Activated CD4-positive, alpha-beta T cell treated with anti-CD3 and anti-CD28 coated beads for 36 hours (primary cell): ENCODE measurements at regions of chr19 and their contacts with region 1.

Region 1: GRCh38 chr19:10717356-10718204 is at the start of gene DNM2:
- DNase-seq: peak; percentile 98
- ATAC-seq: peak; percentile 92
- H3K4me3 Mint-ChIP-seq: peak within 1 kb of the TSS; percentile 97
- H3K27ac Mint-ChIP-seq: peak within 1 kb of the TSS; percentile 89
- H3K4me1 Mint-ChIP-seq: peaks cover 45% of the 10 kb centered on the region
- H3K27me3 Mint-ChIP-seq: no peaks in the 10 kb centered on the region
- total RNA-seq, gene DNM2: 167 to 185 TPM

Region 2: GRCh38 chr19:10403137-10404021 is 314.2 kb before region 1 on chr19 and contains the start of gene CDC37:
- CTCF ChIA-PET with region 1: interaction called, 3 read pairs
- POLR2A ChIA-PET with region 1: no interaction called
- intact Hi-C with region 1: loop called in 1 of 2 experiments (anchors 1 kb)
- DNase-seq: peak; percentile 99
- ATAC-seq: peak; percentile 79
- H3K4me3 Mint-ChIP-seq: peak within 1 kb of the TSS; percentile 94
- H3K27ac Mint-ChIP-seq: peak within 1 kb of the TSS; percentile 87
- H3K4me1 Mint-ChIP-seq: peaks cover 61% of the 10 kb centered on the region
- H3K27me3 Mint-ChIP-seq: no peaks in the 10 kb centered on the region
- total RNA-seq, gene CDC37: 178 to 190 TPM

Region 3: DNA sequence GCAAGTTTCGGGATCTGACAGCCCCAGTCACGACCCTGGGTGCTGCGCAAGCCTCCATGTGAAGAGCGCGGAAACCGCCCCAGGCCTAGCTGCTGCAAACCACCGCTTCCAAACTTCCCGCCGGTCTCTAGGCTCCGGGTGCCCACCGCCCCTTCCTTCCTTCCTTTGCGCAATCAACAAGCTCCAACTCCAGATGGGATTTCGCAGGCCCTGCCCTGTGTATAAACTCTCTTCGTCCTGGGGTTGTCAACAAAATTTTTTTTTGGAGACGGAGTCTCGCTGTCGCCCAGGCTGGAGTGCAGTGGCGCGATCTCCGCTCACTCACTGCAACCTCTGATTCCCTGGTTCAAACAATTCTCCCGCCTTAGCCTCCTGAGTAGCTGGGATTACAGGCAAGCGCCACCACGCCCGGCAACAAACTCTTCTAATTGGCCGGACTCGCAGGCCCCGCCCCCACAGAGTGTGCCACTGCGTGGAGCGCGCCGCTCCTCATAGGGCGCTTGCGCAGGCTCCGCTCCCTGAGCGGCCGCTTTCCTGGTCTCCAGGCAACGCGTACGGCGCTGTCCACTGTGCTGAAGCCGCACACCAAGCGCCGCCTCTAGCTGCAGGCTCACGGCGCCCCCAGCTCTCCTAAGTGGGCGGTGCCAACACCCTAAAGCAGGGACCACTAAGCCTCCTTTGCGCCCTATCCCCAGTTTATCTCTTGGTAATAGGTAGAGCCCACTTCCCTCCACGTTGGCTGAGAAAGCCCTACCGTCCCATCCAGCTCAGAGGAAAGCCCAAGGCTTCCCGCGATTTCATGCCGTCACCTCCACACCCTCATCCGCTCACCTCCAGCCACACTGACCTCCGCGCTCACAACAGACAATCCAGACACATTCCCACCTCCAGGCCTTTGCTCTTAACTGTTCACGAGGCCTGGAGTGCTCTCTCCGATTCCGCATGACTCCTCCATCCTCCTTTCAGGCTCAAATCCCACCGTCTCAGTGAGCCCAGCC is 21.9 kb before region 1 on chr19:
- CTCF ChIA-PET with region 1: interaction called, 48 read pairs
- POLR2A ChIA-PET with region 1: interaction called, 16 read pairs
- intact Hi-C with region 1: loop called in 1 of 2 experiments (anchors 1 kb)
- DNase-seq: peak; percentile 95
- ATAC-seq: peak; percentile 99
- H3K4me3 Mint-ChIP-seq: peak overlapping the region; percentile 59
- H3K27ac Mint-ChIP-seq: no peak overlapping the region
- H3K4me1 Mint-ChIP-seq: peaks cover 13% of the 10 kb centered on the region
- H3K27me3 Mint-ChIP-seq: no peaks in the 10 kb centered on the region

Region 4: GRCh38 chr19:10760273-10760944 is 42.8 kb after region 1 on chr19:
- CTCF ChIA-PET with region 1: interaction called, 19 read pairs
- POLR2A ChIA-PET with region 1: interaction called, 8 read pairs
- intact Hi-C with region 1: loop called (anchors 1 kb)
- DNase-seq: peak; percentile 72
- ATAC-seq: peak; percentile 56
- H3K4me3 Mint-ChIP-seq: peak overlapping the region; percentile 70
- H3K27ac Mint-ChIP-seq: peak overlapping the region; percentile 84
- H3K4me1 Mint-ChIP-seq: peaks cover 83% of the 10 kb centered on the region
- H3K27me3 Mint-ChIP-seq: no peaks in the 10 kb centered on the region

Region 5: GRCh38 chr19:10820173-10820572 is 102.6 kb after region 1 on chr19:
- CTCF ChIA-PET with region 1: interaction called, 10 read pairs
- POLR2A ChIA-PET with region 1: no interaction called
- intact Hi-C with region 1: loop called (anchors 1 to 5 kb)
- DNase-seq: peak; percentile 33
- ATAC-seq: peak; percentile 53
- H3K4me3 Mint-ChIP-seq: no peak overlapping the region
- H3K27ac Mint-ChIP-seq: peak overlapping the region; percentile 39
- H3K4me1 Mint-ChIP-seq: no peaks in the 10 kb centered on the region
- H3K27me3 Mint-ChIP-seq: no peaks in the 10 kb centered on the region

Region 6: GRCh38 chr19:10864538-10864899 is 146.9 kb after region 1 on chr19:
- CTCF ChIA-PET with region 1: interaction called, 44 read pairs
- POLR2A ChIA-PET with region 1: interaction called, 6 read pairs
- intact Hi-C with region 1: loop called (anchors 1 kb)
- DNase-seq: peak; percentile 93
- ATAC-seq: peak; percentile 94
- H3K4me3 Mint-ChIP-seq: no peak overlapping the region
- H3K27ac Mint-ChIP-seq: peak overlapping the region; percentile 16
- H3K4me1 Mint-ChIP-seq: peaks cover 14% of the 10 kb centered on the region
- H3K27me3 Mint-ChIP-seq: no peaks in the 10 kb centered on the region

Region 7: DNA sequence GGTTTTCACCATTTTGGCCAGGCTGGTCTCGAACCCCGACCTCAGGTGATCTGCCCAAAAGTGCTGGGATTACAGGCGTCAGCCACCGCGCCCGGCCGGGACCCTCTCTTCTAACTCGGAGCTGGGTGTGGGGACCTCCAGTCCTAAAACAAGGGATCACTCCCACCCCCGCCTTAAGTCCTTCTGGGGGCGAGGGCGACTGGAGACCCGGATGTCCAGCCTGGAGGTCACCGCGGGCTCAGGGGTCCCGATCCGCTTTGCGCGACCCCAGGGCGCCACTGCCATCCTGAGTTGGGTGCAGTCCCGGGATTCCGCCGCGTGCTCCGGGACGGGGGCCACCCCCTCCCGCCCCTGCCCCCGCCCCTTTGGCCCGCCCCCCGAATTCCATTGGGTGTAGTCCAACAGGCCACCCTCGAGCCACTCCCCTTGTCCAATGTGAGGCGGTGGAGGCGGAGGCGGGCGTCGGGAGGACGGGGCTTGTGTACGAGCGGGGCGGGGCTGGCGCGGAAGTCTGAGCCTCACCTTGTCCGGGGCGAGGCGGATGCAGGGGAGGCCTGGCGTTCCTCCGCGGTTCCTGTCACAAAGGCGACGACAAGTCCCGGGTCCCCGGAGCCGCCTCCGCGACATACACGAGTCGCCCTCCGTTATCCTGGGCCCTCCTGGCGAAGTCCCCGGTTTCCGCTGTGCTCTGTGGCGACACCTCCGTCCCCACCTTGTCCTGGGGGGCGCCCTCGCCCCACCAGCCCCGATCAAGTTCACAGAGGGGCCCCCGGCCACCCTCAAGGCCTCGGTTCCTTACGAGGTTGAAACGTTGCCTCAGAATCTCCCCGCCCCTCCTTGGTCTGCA is 372.7 kb after region 1 on chr19:
- CTCF ChIA-PET with region 1: no interaction called
- POLR2A ChIA-PET with region 1: no interaction called
- intact Hi-C with region 1: loop called in 1 of 2 experiments (anchors 5 kb)
- DNase-seq: peak; percentile 99
- ATAC-seq: peak; percentile 88
- H3K4me3 Mint-ChIP-seq: peak overlapping the region; percentile 93
- H3K27ac Mint-ChIP-seq: peak overlapping the region; percentile 97
- H3K4me1 Mint-ChIP-seq: peaks cover 51% of the 10 kb centered on the region
- H3K27me3 Mint-ChIP-seq: no peaks in the 10 kb centered on the region